SK-N-SH (cell line): ENCODE measurements at regions of chr7 and their contacts with region 1.

Region 1: GRCh38 chr7:157267516-157267915 is 69.3 kb upstream of the DNAJB6 start:
- DNase-seq: no peak
- H3K4me3 ChIP-seq: no peak overlapping the region
- H3K27ac ChIP-seq: no peak overlapping the region
- H3K4me1 ChIP-seq: peaks cover 0 to 10% of the 10 kb centered on the region in 2 experiments; a peak in 2 of 4 replicates
- H3K27me3 ChIP-seq: no peaks in the 10 kb centered on the region
- CTCF ChIP-seq: no peak
- EP300 ChIP-seq: no peak
- RAD21 ChIP-seq: no peak

Region 2: DNA sequence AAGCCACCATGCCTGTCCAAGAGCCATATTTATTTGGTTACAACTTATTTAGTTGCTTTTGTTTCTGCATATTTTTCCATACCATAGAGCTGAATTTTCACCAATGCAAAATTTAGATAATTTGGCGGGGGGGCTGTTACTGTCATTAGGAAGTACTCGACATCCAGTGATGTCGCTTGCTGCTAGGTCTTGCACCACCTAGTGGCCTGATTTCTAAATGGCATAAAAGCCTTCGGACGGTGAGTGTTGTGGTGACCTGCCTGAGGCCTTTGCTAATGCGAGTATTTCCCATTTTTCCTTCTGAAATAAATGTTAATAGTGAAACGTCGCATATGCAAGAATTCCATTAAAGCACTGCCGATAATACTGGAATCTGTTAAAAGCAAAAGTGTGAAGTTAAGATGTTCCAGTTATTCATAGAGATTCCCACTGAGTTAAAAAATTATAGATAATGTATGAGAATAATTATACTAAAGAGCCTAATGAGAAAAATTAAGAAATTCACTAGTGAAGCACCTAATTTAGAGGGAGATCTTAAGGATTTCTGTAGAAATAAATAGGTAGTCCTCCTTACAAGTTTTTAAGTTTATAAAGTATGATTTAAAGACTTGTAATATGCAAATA is 16.8 kb before region 1 on chr7:
- CTCF ChIA-PET with region 1: interaction called, 87 read pairs
- POLR2A ChIA-PET with region 1: no interaction called
- DNase-seq: peak; percentile 78
- H3K4me3 ChIP-seq: no peak overlapping the region
- H3K27ac ChIP-seq: no peak overlapping the region
- H3K4me1 ChIP-seq: no peaks in the 10 kb centered on the region; a peak in 2 of 4 replicates
- H3K27me3 ChIP-seq: no peaks in the 10 kb centered on the region
- CTCF ChIP-seq: peak; percentile 99
- EP300 ChIP-seq: no peak
- RAD21 ChIP-seq: peak; percentile 68

Region 3: GRCh38 chr7:158050978-158051651 is 783.6 kb after region 1 on chr7:
- CTCF ChIA-PET with region 1: no interaction called
- POLR2A ChIA-PET with region 1: no interaction called
- DNase-seq: no peak
- H3K4me3 ChIP-seq: no peak overlapping the region
- H3K27ac ChIP-seq: peak overlapping the region in 1 of 2 experiments; percentile 12; a peak in 2 of 4 replicates
- H3K4me1 ChIP-seq: peaks cover 0 to 18% of the 10 kb centered on the region in 2 experiments; a peak in 1 of 4 replicates
- H3K27me3 ChIP-seq: no peaks in the 10 kb centered on the region
- CTCF ChIP-seq: no peak
- EP300 ChIP-seq: no peak
- RAD21 ChIP-seq: no peak